Astrocyte of the cerebellum (primary cell): ENCODE measurements at regions of chr12 and their contacts with region 1.

Region 1: GRCh38 chr12:121252712-121253345 is 42.9 kb downstream of the P2RX4 start:
- DNase-seq: no peak
- H3K4me3 ChIP-seq: no peak overlapping the region
- CTCF ChIP-seq: no peak

Region 2: GRCh38 chr12:121190523-121191031 is 62.3 kb before region 1 on chr12:
- in situ Hi-C with region 1: no loop called
- DNase-seq: peak; percentile 88
- H3K4me3 ChIP-seq: no peak overlapping the region
- CTCF ChIP-seq: no peak

Region 3: DNA sequence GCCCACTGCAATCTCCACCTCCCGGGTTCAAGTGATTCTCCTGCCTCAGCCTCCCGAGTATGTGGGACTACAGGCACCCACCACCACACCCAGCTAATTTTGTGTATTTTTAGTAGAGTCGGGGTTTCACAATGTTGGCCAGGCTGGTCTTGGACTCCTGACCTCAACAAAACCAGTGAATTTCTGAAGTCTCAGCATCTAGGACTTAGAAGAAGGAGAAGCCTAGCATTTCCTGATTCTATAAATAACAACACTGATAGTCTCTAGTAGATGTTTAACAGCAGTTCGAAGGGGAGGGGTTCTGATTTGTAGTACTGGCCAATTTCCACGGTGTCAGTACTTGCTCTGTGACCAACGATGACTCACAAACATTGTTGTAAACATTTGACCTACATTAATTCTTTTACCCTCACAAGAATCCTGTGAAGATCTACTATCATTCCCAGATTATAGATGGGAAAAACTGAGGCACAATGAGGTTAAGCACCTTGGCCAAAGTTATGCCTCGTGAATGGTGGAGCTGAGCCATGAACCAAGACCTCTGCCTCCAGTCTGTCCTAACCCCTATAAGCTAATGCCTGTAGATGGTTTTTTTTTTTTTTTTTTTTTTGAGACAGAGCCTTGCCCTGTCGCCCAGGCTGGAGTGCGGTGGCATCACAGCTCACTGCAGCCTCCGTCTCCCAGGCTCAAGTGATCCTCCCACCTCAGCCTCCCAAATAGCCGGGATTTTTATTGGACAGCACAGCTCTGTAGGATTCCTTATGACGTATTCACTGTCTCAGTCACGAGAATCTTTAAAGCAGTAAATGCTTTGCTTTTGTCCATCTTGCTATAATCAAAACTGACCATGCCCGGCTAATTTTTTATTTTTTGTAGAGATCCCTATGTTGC is 37.7 kb before region 1 on chr12:
- in situ Hi-C with region 1: loop called (anchors 5 kb)
- DNase-seq: peak; percentile 61
- H3K4me3 ChIP-seq: no peak overlapping the region
- CTCF ChIP-seq: no peak